Natural killer cell (primary cell): ENCODE measurements at regions of chr6 and their contacts with region 1.

Region 1: GRCh38 chr6:131063028-131063763 is at the start of gene EPB41L2:
- DNase-seq: peak; percentile 78 to 91
- ATAC-seq: peak; percentile 89 to 93 (median 92)
- H3K4me3 ChIP-seq: peak within 1 kb of the TSS; percentile 87
- H3K4me3 Mint-ChIP-seq: peak within 1 kb of the TSS; percentile 73
- H3K27ac ChIP-seq: peak within 1 kb of the TSS; percentile 37
- H3K27ac Mint-ChIP-seq: peak within 1 kb of the TSS; percentile 29 to 44
- H3K4me1 ChIP-seq: peaks cover 16% of the 10 kb centered on the region
- H3K4me1 Mint-ChIP-seq: peaks cover 15 to 18% of the 10 kb centered on the region in 2 donors
- H3K27me3 ChIP-seq: no peaks in the 10 kb centered on the region
- H3K27me3 Mint-ChIP-seq: peaks cover 0 to 3% of the 10 kb centered on the region in 2 donors
- CTCF ChIP-seq: no peak
- total RNA-seq, gene EPB41L2: 6.8 to 11.4 (median 11.0) TPM

Region 2: DNA sequence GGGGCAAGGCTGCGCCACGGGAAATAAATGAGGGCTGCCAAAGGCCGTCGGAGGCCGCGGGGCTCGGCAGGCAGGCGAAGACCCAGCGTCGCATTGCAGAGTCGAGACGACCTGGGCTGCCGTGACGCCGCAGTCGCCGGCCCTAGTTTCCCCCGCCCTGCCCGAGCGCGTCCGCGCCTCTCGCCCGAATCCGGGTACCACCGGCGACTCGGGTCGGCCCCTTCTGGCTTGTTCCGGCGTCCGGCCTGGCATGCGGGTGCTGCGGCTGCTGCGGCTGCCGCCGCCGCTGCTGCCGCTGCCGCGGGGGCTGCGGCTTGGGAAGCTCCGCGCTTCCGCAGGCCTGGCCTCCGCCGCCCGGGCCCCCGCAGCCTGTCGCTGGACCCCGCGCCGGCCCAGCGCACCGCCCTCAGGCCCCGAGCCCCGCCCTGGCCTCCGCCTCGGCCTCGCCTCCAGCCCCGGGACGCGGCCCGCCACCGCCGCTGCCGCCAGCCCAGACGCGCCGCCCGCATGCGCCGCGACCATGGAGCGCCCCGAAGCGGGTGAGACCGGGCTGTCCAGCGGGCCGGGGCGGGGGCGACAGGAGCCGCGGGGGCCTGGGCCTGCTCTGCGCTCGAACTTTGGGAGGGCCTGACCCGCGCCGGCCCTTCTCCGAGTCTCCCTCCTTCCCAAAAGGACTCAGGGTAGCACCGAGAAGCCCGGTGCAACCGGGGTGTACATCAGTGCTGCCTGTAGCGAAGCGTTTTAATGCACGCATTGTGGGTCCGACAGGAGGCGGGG is 72.2 kb after region 1 on chr6 and contains the start of gene AKAP7:
- intact Hi-C with region 1: loop called (anchors 5 kb)
- DNase-seq: peak; percentile 55 to 70
- ATAC-seq: peak; percentile 76 to 84 (median 78)
- H3K4me3 ChIP-seq: peak within 1 kb of the TSS; percentile 72
- H3K4me3 Mint-ChIP-seq: peak within 1 kb of the TSS; percentile 100
- H3K27ac ChIP-seq: peak within 1 kb of the TSS; percentile 78
- H3K27ac Mint-ChIP-seq: peak within 1 kb of the TSS; percentile 96 to 97
- H3K4me1 ChIP-seq: peaks cover 3% of the 10 kb centered on the region
- H3K4me1 Mint-ChIP-seq: peaks cover 26 to 31% of the 10 kb centered on the region in 2 donors
- H3K27me3 ChIP-seq: no peaks in the 10 kb centered on the region
- H3K27me3 Mint-ChIP-seq: peaks cover 0 to 3% of the 10 kb centered on the region in 2 donors
- CTCF ChIP-seq: no peak
- total RNA-seq, gene AKAP7: 13.5 to 21.0 (median 14.7) TPM